CD14-positive monocyte (primary cell): ENCODE measurements at regions of chr1 and their contacts with region 1.

Region 1: DNA sequence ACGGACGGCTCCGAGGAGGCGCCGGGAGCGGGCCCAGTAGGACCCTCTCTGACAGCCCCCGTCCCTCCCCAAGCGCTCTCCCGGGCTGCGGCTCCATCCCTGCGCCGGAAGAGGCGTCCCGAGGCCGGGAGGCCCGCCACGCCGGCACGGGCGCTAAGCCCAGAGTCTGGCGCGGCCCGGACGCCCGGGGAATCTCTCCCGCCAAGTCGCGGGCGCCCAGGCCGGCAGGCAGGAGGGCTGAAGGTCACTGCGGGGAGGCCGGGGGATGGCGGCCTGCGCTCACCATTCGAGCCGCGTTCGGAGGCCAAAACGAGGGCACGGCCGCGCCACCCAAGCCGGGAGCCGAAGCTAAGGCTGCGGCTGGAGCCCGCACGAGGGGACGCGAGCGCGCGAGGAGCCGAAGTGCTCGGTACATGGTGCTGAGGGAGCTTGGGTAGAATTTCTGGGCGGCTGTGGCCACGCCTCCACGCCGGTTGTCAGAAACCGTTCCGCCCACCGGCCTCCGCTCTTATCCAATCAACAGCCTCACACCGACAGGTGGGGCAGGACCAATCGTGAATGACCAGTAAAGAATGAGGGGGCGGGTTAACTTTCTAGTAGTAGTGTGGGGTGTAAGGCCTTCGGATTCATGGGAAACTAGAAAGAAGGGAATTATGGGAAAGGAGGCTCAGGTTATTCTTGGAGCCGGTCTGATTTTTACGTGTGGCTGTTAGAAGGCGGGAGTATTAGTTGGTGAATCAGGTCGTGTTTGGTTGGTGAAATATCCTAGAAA is at the start of gene FH:
- DNase-seq: peak; percentile 90 to 96 (median 92)
- H3K4me3 ChIP-seq: peak within 1 kb of the TSS; percentile 41 to 85 (median 71)
- H3K4me3 Mint-ChIP-seq: peak within 1 kb of the TSS; percentile 81 to 92
- H3K27ac ChIP-seq: peak within 1 kb of the TSS; percentile 45 to 83
- H3K27ac Mint-ChIP-seq: peak within 1 kb of the TSS; percentile 55 to 82 (median 79)
- H3K4me1 ChIP-seq: peaks cover 14 to 25% of the 10 kb centered on the region in 2 donors
- H3K4me1 Mint-ChIP-seq: peaks cover 14% of the 10 kb centered on the region
- H3K27me3 ChIP-seq: peaks cover 3 to 19% of the 10 kb centered on the region in 2 donors
- H3K27me3 Mint-ChIP-seq: peaks cover 16 to 20% (median 17%) of the 10 kb centered on the region in 3 donors
- CTCF ChIP-seq: no peak
- polyA plus RNA-seq, gene FH: 21.1 to 34.9 (median 32.5) TPM

Region 2: GRCh38 chr1:241130881-241131280 is 388.6 kb before region 1 on chr1:
- intact Hi-C with region 1: no loop called
- DNase-seq: no peak
- H3K4me3 ChIP-seq: no peak overlapping the region
- H3K4me3 Mint-ChIP-seq: no peak overlapping the region
- H3K27ac ChIP-seq: no peak overlapping the region
- H3K27ac Mint-ChIP-seq: no peak overlapping the region
- H3K4me1 ChIP-seq: no peaks in the 10 kb centered on the region
- H3K4me1 Mint-ChIP-seq: no peaks in the 10 kb centered on the region
- H3K27me3 ChIP-seq: no peaks in the 10 kb centered on the region
- H3K27me3 Mint-ChIP-seq: peaks cover 0 to 2% (median 0%) of the 10 kb centered on the region in 3 donors
- CTCF ChIP-seq: no peak

Region 3: DNA sequence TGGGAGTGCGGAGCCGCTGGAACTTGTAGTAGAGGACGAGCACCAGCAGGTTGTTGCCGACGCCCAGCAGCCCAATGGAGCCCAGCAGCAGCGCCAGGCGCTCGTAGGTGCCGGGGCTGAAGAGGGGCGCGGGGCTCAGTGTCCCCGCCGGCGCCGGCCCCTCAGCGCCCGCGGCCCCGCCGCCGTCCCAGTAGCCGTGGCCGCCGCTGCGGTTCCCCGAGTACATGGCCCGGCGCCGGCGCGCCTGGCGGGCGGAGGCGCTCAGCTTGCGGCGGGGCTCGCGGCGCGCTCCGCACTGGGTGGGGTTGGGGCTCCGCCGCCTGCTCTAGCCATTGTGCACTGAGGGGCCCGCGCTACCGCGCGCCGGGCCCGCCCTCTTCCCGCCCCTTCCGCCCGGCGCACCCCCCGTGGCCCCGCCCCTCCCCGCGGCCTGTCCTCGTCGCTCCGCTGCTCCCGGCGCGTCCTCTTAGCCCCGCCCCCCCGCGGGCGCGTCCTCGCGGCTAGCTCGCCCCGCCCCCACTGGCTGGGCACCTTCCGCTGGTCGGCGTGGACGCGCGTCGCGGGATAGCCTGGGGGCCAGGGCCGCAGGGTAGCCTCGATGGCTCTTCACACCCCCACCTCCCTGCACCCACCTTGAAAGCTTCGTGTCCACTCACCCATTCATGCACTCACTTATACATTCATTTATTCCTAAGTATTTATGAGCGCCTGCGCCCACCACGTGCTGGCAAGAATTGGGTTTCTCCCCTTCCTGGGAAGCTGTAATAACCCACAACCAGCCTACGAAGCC is 120.7 kb after region 1 on chr1 and contains the starts of genes CHML and OPN3:
- intact Hi-C with region 1: loop called in 1 of 2 experiments (anchors 5 kb)
- DNase-seq: peak; percentile 86 to 90 (median 89)
- H3K4me3 ChIP-seq: peak within 1 kb of the TSS; percentile 81 to 92 (median 88)
- H3K4me3 Mint-ChIP-seq: peak within 1 kb of the TSS; percentile 84 to 92
- H3K27ac ChIP-seq: peak within 1 kb of the TSS; percentile 74 to 90
- H3K27ac Mint-ChIP-seq: peak within 1 kb of the TSS; percentile 81 to 96 (median 87)
- H3K4me1 ChIP-seq: peaks cover 34 to 49% of the 10 kb centered on the region in 2 donors
- H3K4me1 Mint-ChIP-seq: peaks cover 42% of the 10 kb centered on the region
- H3K27me3 ChIP-seq: no peaks in the 10 kb centered on the region
- H3K27me3 Mint-ChIP-seq: peaks cover 0 to 2% (median 2%) of the 10 kb centered on the region in 3 donors
- CTCF ChIP-seq: no peak
- polyA plus RNA-seq, gene CHML: 3.4 to 6.6 (median 3.4) TPM
- polyA plus RNA-seq, gene OPN3: 14.5 to 56.1 (median 55.2) TPM

Region 4: GRCh38 chr1:241847796-241848685 is 328.5 kb after region 1 on chr1 and contains the start of gene EXO1:
- intact Hi-C with region 1: loop called (anchors 5 to 10 kb)
- DNase-seq: peak; percentile 85 to 86 (median 85)
- H3K4me3 ChIP-seq: peak within 1 kb of the TSS; percentile 76 to 94 (median 79)
- H3K4me3 Mint-ChIP-seq: peak within 1 kb of the TSS; percentile 94 to 97
- H3K27ac ChIP-seq: peak within 1 kb of the TSS; percentile 90 to 97
- H3K27ac Mint-ChIP-seq: peak within 1 kb of the TSS; percentile 98 to 100 (median 100)
- H3K4me1 ChIP-seq: peaks cover 15 to 19% of the 10 kb centered on the region in 2 donors
- H3K4me1 Mint-ChIP-seq: peaks cover 17% of the 10 kb centered on the region
- H3K27me3 ChIP-seq: no peaks in the 10 kb centered on the region
- H3K27me3 Mint-ChIP-seq: peaks cover 0 to 6% (median 0%) of the 10 kb centered on the region in 3 donors
- CTCF ChIP-seq: no peak
- polyA plus RNA-seq, gene EXO1: 0.16 to 0.26 TPM in 2 of 3 donors, not detected in the other

Region 5: GRCh38 chr1:241998412-241998921 is 479.0 kb after region 1 on chr1:
- intact Hi-C with region 1: loop called in 1 of 2 experiments (anchors 10 kb)
- DNase-seq: peak; percentile 44 to 79 (median 48)
- H3K4me3 ChIP-seq: peak overlapping the region; percentile 2 to 77 (median 22)
- H3K4me3 Mint-ChIP-seq: peak overlapping the region; percentile 70 to 91
- H3K27ac ChIP-seq: no peak overlapping the region
- H3K27ac Mint-ChIP-seq: peak overlapping the region in 5 of 7 donors; percentile 50 to 73 (median 61)
- H3K4me1 ChIP-seq: peaks cover 0 to 7% of the 10 kb centered on the region in 2 donors
- H3K4me1 Mint-ChIP-seq: peaks cover 6% of the 10 kb centered on the region
- H3K27me3 ChIP-seq: peaks cover 0 to 5% of the 10 kb centered on the region in 2 donors
- H3K27me3 Mint-ChIP-seq: peaks cover 6 to 15% (median 11%) of the 10 kb centered on the region in 3 donors
- CTCF ChIP-seq: peak; percentile 82